ENCODE measurements at regions of chr4 and their contacts with region 1.

Region 1: DNA sequence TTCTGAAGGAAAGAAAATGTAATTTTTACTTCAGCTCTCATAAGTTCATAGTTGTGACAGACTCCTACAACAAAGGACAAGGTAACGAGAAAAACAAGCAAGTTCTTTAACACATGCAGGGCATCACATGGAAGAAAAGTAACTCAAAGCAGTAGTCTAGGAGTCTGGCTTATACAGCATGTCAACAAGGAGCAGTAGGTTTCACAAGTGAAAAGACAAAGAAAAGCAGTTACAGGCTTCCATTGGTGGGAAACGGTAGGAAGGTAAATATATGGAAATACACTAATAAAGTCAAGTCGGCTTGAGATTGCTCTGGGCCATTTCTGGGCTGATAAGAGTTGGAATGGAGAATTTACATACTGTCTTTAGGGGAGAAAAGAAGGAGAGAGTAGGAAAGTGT is 228.4 kb upstream of the ZFP42 start:
- DNase-seq: peak in 1 of 2 experiments; percentile 24
- H3K4me3 ChIP-seq: no peak overlapping the region
- H3K4me3 Mint-ChIP-seq: peak overlapping the region; percentile 10
- H3K27ac Mint-ChIP-seq: peak overlapping the region; percentile 2
- H3K4me1 ChIP-seq: peaks cover 9% of the 10 kb centered on the region; the same call in 1 of the 2 replicates
- H3K4me1 Mint-ChIP-seq: peaks cover 14% of the 10 kb centered on the region
- H3K27me3 ChIP-seq: no peaks in the 10 kb centered on the region
- H3K27me3 Mint-ChIP-seq: no peaks in the 10 kb centered on the region
- CTCF ChIP-seq: no peak

Region 2: GRCh38 chr4:187814737-187815465 is 47.7 kb after region 1 on chr4:
- CTCF ChIA-PET with region 1: no interaction called
- POLR2A ChIA-PET with region 1: interaction called, 3 read pairs
- intact Hi-C with region 1: loop called (anchors 5 kb)
- DNase-seq: peak; percentile 82 to 84
- H3K4me3 ChIP-seq: peak overlapping the region; percentile 71
- H3K4me3 Mint-ChIP-seq: peak overlapping the region; percentile 94
- H3K27ac Mint-ChIP-seq: peak overlapping the region; percentile 98
- H3K4me1 ChIP-seq: 0 out of 2 replicates have a peak, but pooled peaks cover 8% of the 10 kb centered on the region
- H3K4me1 Mint-ChIP-seq: peaks cover 6% of the 10 kb centered on the region
- H3K27me3 ChIP-seq: no peaks in the 10 kb centered on the region
- H3K27me3 Mint-ChIP-seq: no peaks in the 10 kb centered on the region
- CTCF ChIP-seq: no peak